WTC11 (cell line): ENCODE measurements at regions of chr10 and their contacts with region 1.

Region 1: GRCh38 chr10:16520900-16521299 is 779 bp downstream of the C1QL3 start:
- DNase-seq: peak; percentile 66
- ATAC-seq: peak; percentile 52
- H3K4me3 Mint-ChIP-seq: peak overlapping the region; percentile 57
- H3K27ac Mint-ChIP-seq: no peak overlapping the region
- H3K4me1 Mint-ChIP-seq: peaks cover 25% of the 10 kb centered on the region
- H3K27me3 Mint-ChIP-seq: peaks cover 54% of the 10 kb centered on the region
- CTCF ChIP-seq: no peak

Region 2: GRCh38 chr10:15901889-15902288 is 619.0 kb before region 1 on chr10:
- CTCF ChIA-PET with region 1: interaction called, 22 read pairs
- POLR2A ChIA-PET with region 1: no interaction called
- DNase-seq: no peak
- ATAC-seq: peak; percentile 80
- H3K4me3 Mint-ChIP-seq: no peak overlapping the region
- H3K27ac Mint-ChIP-seq: no peak overlapping the region
- H3K4me1 Mint-ChIP-seq: peaks cover 9% of the 10 kb centered on the region
- H3K27me3 Mint-ChIP-seq: no peaks in the 10 kb centered on the region
- CTCF ChIP-seq: no peak

Region 3: DNA sequence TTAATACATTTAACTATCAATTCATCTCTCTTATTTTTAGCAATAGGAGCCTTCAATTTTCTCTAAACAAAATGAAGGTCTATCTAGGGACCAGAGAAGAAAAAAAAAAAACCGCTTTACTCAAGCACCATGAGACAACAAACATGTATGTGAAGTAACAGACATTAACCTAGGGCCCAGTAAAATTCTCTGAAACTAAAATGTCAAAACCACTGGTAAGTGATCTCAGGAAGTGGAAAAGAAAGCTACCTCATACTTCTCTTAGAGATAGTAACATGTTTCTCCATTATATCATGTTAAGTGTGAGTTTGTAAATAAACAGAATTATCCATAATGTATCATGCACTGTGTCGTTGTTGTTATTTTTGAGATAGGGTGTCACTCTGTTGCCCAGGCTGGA is 119.5 kb before region 1 on chr10:
- CTCF ChIA-PET with region 1: no interaction called
- POLR2A ChIA-PET with region 1: no interaction called
- DNase-seq: no peak
- ATAC-seq: no peak
- H3K4me3 Mint-ChIP-seq: no peak overlapping the region
- H3K27ac Mint-ChIP-seq: no peak overlapping the region
- H3K4me1 Mint-ChIP-seq: peaks cover 21% of the 10 kb centered on the region
- H3K27me3 Mint-ChIP-seq: no peaks in the 10 kb centered on the region
- CTCF ChIP-seq: no peak

Region 4: DNA sequence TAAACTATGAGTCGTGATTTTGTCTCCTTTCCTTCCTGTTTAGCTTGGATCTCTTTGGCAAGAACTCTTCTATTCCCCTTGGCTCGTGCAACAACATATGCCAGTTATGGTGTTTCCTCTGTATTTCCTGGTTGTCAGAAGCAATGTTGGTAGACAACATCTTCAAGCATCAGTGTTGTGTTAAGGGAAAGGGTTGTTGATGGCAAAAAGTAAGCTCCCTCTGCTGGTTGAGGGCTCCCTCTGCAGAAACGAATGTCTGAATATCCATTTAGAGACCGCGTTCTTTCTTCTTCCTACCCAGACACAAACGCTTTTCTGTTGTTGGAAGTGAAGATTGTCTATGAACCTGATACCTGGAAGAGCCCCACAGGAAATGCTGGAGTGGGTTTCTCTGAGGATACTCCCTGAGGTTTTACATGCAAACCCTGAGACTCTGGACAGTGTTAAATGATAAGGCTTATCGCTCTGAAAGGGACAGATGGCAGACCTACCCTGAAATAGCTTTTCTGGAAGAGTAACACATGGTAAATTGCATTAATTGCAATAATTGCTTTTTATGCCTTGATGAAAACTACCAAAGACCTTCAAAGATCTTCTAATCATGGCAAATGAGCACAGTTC is 24.3 kb after region 1 on chr10:
- CTCF ChIA-PET with region 1: interaction called, 10 read pairs
- POLR2A ChIA-PET with region 1: no interaction called
- DNase-seq: no peak
- ATAC-seq: peak; percentile 75
- H3K4me3 Mint-ChIP-seq: no peak overlapping the region
- H3K27ac Mint-ChIP-seq: no peak overlapping the region
- H3K4me1 Mint-ChIP-seq: no peaks in the 10 kb centered on the region
- H3K27me3 Mint-ChIP-seq: peaks cover 8% of the 10 kb centered on the region
- CTCF ChIP-seq: peak; percentile 58; the same call in 1 of the 2 replicates

Region 5: DNA sequence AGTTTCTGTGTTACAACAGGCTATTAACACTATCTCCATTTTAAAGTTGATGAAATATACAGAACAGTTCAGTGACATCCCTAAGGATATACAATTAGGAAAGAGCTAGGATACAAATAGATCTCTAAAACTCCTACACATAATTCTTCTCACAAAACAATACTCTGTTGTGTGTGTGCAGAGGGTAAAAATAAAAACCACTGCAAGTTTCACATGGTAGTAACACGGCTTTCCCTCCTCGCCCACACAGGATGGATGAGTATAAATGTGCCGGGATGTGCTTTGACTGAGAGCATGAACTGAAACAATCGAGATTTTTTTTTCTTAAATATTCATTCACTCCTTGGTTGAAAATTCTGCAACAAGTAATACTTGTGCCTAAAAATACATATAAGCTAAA is 132.3 kb after region 1 on chr10:
- CTCF ChIA-PET with region 1: no interaction called
- POLR2A ChIA-PET with region 1: no interaction called
- DNase-seq: no peak
- ATAC-seq: no peak
- H3K4me3 Mint-ChIP-seq: no peak overlapping the region
- H3K27ac Mint-ChIP-seq: no peak overlapping the region
- H3K4me1 Mint-ChIP-seq: peaks cover 3% of the 10 kb centered on the region; the same call in 1 of the 2 replicates
- H3K27me3 Mint-ChIP-seq: no peaks in the 10 kb centered on the region
- CTCF ChIP-seq: no peak